Activated B cell treated with CpG ODN at 0.5 μM for 24 hours (primary cell): ENCODE measurements at regions of chr17 and their contacts with region 1.

Region 1: GRCh38 chr17:56592487-56593085 is 913 bp upstream of the NOG start:
- DNase-seq: peak; percentile 75
- ATAC-seq: peak; percentile 81
- H3K4me3 Mint-ChIP-seq: peak overlapping the region; percentile 74
- H3K27ac Mint-ChIP-seq: no peak overlapping the region
- H3K4me1 Mint-ChIP-seq: peaks cover 33% of the 10 kb centered on the region
- H3K27me3 Mint-ChIP-seq: peaks cover 49% of the 10 kb centered on the region
- CTCF ChIP-seq: no peak

Region 2: GRCh38 chr17:56577843-56578204 is 14.8 kb before region 1 on chr17:
- CTCF ChIA-PET with region 1: no interaction called
- POLR2A ChIA-PET with region 1: no interaction called
- intact Hi-C with region 1: no loop called
- DNase-seq: no peak
- ATAC-seq: no peak
- H3K4me3 Mint-ChIP-seq: no peak overlapping the region
- H3K27ac Mint-ChIP-seq: no peak overlapping the region
- H3K4me1 Mint-ChIP-seq: no peaks in the 10 kb centered on the region
- H3K27me3 Mint-ChIP-seq: peaks cover 19% of the 10 kb centered on the region
- CTCF ChIP-seq: no peak

Region 3: GRCh38 chr17:56653877-56654276 is 61.3 kb after region 1 on chr17:
- CTCF ChIA-PET with region 1: no interaction called
- POLR2A ChIA-PET with region 1: no interaction called
- intact Hi-C with region 1: loop called (anchors 1 kb)
- DNase-seq: no peak
- ATAC-seq: peak; percentile 75
- H3K4me3 Mint-ChIP-seq: no peak overlapping the region
- H3K27ac Mint-ChIP-seq: no peak overlapping the region
- H3K4me1 Mint-ChIP-seq: peaks cover 2% of the 10 kb centered on the region
- H3K27me3 Mint-ChIP-seq: peaks cover 7% of the 10 kb centered on the region
- CTCF ChIP-seq: no peak

Region 4: DNA sequence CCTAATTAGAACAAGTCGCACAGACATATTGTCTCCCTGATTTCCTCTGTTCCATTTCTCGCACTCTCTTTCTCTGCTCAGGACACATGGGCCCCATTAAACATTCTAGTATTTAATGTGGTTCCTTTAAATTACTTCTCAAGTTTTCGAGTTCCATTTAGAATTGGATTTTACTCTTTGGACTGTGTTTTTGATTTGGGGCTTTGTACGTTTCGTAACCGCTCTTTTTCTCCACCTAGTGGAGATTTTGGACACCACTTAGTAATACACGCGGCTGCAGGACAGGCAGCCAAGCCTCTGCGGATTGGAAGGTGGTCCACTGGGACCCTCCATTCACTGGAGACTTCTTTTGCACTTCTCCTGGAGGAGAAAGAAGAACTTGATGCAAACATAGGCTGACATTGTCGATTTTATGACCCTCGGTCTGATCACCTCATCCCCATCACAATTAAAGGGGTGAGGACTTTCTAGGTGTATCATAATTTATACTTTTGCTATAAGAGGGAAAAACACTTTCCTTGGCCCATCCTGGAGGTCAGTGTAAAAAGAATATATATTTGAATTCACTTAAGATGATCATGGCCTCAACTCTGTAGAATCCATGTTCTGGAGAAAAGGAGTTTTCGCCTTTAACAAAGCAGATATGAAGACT is 86.7 kb after region 1 on chr17:
- CTCF ChIA-PET with region 1: no interaction called
- POLR2A ChIA-PET with region 1: no interaction called
- intact Hi-C with region 1: loop called (anchors 1 kb)
- DNase-seq: no peak
- ATAC-seq: no peak
- H3K4me3 Mint-ChIP-seq: peak overlapping the region; percentile 62
- H3K27ac Mint-ChIP-seq: no peak overlapping the region
- H3K4me1 Mint-ChIP-seq: peaks cover 9% of the 10 kb centered on the region
- H3K27me3 Mint-ChIP-seq: peaks cover 47% of the 10 kb centered on the region
- CTCF ChIP-seq: no peak

Region 5: DNA sequence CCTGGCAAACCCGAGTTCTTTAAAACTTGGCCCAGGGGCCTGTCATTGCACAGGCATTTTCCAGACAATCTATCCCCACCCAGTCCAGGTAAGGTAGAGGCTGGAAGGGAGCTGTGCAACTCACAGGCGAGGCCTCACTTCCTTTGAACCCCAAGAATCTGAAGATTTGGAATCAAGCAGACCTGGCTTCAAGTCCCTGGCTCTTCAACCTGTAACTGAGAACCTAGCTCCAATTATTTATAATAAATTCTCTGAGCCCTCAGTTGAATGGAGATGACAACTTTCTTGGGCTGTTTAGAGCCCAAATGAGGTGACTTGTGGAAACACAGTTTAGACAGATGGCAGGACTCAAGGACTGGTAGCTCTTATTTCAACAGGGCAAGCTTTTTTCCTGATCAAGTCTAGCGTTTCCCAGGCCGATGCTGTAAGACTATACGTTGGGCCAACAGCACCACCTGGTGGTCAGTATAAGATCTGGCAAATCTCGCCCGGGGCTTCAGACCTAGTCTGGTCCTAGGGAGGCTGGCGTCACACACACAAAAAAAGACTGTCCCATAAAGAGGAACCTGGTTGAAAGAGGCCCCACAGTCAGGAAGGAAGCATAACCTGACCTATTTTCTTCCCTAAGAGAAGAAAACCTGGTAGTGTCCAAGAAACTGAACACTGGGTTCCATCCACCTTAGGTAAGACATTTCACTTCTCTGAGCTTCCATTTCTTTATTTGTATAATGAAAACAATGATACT is 123.2 kb after region 1 on chr17:
- CTCF ChIA-PET with region 1: interaction called, 26 read pairs
- POLR2A ChIA-PET with region 1: no interaction called
- intact Hi-C with region 1: loop called (anchors 1 kb)
- DNase-seq: peak; percentile 38
- ATAC-seq: peak; percentile 87
- H3K4me3 Mint-ChIP-seq: no peak overlapping the region
- H3K27ac Mint-ChIP-seq: no peak overlapping the region
- H3K4me1 Mint-ChIP-seq: peaks cover 3% of the 10 kb centered on the region
- H3K27me3 Mint-ChIP-seq: no peaks in the 10 kb centered on the region
- CTCF ChIP-seq: peak; percentile 56

Region 6: DNA sequence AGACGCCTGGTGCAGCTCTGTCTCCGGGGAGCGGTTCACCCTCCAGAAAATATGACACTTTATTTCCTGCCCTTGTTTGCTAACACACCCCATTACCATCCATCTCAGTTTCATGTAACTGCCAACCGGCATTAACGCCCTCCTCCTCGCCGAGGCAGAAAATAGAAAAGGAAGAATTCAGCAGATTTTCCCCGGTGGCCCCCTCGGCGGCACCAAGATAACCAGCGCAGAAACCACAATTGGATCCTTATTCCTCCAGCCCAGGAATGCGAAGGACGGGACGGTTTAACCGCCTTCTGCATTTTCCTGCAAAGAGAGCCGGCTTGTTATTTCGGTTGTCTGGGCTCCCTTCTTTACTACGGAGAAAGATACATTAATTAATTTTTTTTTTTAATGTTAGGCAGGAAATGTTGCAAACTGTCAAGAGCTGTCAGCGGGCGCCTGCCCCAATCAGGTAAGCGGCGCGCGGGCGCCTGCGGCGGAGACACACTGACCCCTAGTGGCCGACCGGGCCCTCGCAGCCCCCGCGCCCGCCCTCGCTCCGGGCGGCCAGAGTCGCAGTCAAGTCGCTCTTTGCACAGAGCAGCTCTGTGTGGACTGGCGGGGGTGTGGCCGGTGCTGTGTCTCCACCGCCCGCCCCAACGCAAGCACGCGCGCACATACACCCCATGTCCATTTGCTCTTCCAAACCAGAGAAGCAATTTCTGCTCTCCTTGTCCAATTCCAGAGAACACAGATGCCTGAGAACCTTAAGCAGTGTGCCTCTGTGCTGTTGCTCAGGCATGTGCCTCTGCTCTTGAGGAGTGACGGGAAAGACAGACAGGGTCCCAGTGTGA is 187.5 kb after region 1 on chr17:
- CTCF ChIA-PET with region 1: interaction called, 19 read pairs
- POLR2A ChIA-PET with region 1: interaction called, 3 read pairs
- intact Hi-C with region 1: loop called (anchors 1 kb)
- DNase-seq: peak; percentile 80
- ATAC-seq: peak; percentile 99
- H3K4me3 Mint-ChIP-seq: peak overlapping the region; percentile 85
- H3K27ac Mint-ChIP-seq: peak overlapping the region; percentile 3
- H3K4me1 Mint-ChIP-seq: peaks cover 10% of the 10 kb centered on the region
- H3K27me3 Mint-ChIP-seq: peaks cover 34% of the 10 kb centered on the region
- CTCF ChIP-seq: peak; percentile 99

Region 7: DNA sequence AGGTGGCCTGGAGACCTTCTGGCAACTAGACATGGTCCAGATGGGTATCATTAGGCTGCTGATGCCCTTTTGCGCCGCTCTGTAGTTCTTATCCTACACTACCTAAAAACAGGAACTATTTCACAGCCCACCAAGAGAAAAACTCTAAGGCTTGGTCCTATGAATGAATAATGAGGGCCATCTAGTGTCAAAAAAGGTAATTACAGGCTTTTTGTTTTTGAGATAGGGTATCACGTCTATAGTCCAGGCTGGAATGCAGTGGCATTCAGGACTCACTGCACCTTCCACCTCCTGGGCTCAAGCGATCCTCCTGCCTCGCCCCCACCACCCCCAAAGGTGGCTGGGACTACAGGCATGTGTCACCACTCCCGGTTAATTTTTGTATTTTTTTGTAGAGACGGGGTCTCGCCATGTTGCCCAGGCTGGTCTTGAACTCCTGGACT is 347.3 kb after region 1 on chr17:
- CTCF ChIA-PET with region 1: no interaction called
- POLR2A ChIA-PET with region 1: no interaction called
- intact Hi-C with region 1: loop called (anchors 1 kb)
- DNase-seq: no peak
- ATAC-seq: peak; percentile 93
- H3K4me3 Mint-ChIP-seq: no peak overlapping the region
- H3K27ac Mint-ChIP-seq: no peak overlapping the region
- H3K4me1 Mint-ChIP-seq: peaks cover 3% of the 10 kb centered on the region
- H3K27me3 Mint-ChIP-seq: no peaks in the 10 kb centered on the region
- CTCF ChIP-seq: peak; percentile 84